CD4-positive, alpha-beta memory T cell (primary cell): ENCODE measurements at regions of chr3 and their contacts with region 1.

Region 1: GRCh38 chr3:186589121-186589520 is 18.6 kb downstream of the DNAJB11 start:
- DNase-seq: no peak
- H3K4me3 ChIP-seq: no peak overlapping the region
- H3K4me3 Mint-ChIP-seq: no peak overlapping the region
- H3K27ac ChIP-seq: no peak overlapping the region
- H3K27ac Mint-ChIP-seq: no peak overlapping the region
- H3K4me1 ChIP-seq: peaks cover 14% of the 10 kb centered on the region
- H3K4me1 Mint-ChIP-seq: peaks cover 8 to 23% (median 16%) of the 10 kb centered on the region in 4 donors
- H3K27me3 ChIP-seq: no peaks in the 10 kb centered on the region
- H3K27me3 Mint-ChIP-seq: no peaks in the 10 kb centered on the region

Region 2: DNA sequence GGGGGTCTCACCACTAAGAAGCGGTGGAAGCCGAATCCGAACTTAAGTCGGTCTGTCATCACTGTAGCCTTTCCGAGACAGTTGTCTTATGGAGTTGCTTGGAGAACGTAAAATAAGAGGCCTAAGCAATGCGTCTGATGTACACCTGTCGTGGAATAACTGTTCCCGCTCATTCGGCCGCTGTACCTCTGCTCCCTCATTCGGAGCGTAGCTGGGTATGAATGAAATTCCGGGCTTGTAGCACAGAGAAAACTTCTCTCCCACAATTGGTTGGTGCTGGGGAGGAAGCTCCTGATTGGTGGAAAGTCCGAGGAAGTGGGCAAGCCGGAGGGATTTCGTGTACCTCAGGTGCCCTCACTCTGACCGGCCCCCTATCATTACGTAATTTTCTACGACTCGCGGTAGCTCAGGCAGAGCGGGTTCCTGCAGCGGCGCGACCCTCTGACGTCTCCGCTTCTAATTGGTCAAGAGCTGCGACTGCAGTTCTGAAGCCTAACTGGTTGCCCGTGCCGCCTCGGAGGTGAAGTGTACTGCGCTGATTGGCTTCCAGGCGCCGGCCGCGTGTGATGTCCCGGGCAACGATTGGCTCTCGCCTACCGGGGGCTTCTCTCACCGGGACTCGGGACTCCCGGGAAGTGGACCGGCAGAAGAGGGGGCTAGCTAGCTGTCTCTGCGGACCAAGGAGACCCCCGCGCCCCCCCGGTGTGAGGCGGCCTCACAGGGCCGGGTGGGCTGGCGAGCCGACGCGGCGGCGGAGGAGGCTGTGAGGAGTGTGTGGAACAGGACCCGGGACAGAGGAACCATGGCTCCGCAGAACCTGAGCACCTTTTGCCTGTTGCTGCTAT is 18.8 kb before region 1 on chr3 and contains the start of gene DNAJB11:
- CTCF ChIA-PET with region 1: interaction called, 4 read pairs
- POLR2A ChIA-PET with region 1: interaction called, 4 read pairs
- intact Hi-C with region 1: loop called (anchors 2 kb)
- DNase-seq: peak; percentile 96 to 100 (median 99)
- H3K4me3 ChIP-seq: peak within 1 kb of the TSS; percentile 71 to 93
- H3K4me3 Mint-ChIP-seq: peak within 1 kb of the TSS; percentile 89 to 100 (median 94)
- H3K27ac ChIP-seq: peak within 1 kb of the TSS; percentile 91
- H3K27ac Mint-ChIP-seq: peak within 1 kb of the TSS; percentile 95 to 99 (median 98)
- H3K4me1 ChIP-seq: peaks cover 37% of the 10 kb centered on the region
- H3K4me1 Mint-ChIP-seq: peaks cover 30 to 71% (median 45%) of the 10 kb centered on the region in 4 donors
- H3K27me3 ChIP-seq: no peaks in the 10 kb centered on the region
- H3K27me3 Mint-ChIP-seq: no peaks in the 10 kb centered on the region
- total RNA-seq, gene DNAJB11: 34.0 to 38.6 TPM

Region 3: DNA sequence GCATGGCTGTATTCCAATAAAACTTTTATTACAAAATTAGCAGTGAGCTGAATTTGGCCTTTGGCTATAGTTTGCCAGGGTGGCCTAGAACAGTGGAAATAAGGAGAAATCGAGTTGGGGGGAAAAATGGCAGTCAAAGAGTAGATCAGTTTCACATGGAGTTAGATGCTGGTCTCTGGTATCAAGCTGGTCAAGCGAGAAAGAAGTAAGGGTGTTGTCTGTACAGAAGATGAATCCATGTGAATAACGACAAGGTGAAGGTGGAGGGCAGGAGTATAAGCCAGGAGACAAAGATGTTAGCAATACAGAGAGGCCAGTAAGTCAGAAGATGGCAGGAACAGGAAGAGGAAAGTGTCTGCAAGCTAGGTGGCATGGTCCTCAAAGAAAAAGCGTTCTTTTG is 35.5 kb after region 1 on chr3:
- CTCF ChIA-PET with region 1: no interaction called
- POLR2A ChIA-PET with region 1: no interaction called
- intact Hi-C with region 1: no loop called
- DNase-seq: no peak
- H3K4me3 ChIP-seq: no peak overlapping the region
- H3K4me3 Mint-ChIP-seq: no peak overlapping the region
- H3K27ac ChIP-seq: no peak overlapping the region
- H3K27ac Mint-ChIP-seq: no peak overlapping the region
- H3K4me1 ChIP-seq: no peaks in the 10 kb centered on the region
- H3K4me1 Mint-ChIP-seq: no peaks in the 10 kb centered on the region
- H3K27me3 ChIP-seq: no peaks in the 10 kb centered on the region
- H3K27me3 Mint-ChIP-seq: peaks cover 8 to 9% of the 10 kb centered on the region in 2 donors

Region 4: GRCh38 chr3:186640473-186640818 is 51.3 kb after region 1 on chr3:
- CTCF ChIA-PET with region 1: no interaction called
- POLR2A ChIA-PET with region 1: no interaction called
- intact Hi-C with region 1: no loop called
- DNase-seq: no peak
- H3K4me3 ChIP-seq: no peak overlapping the region
- H3K4me3 Mint-ChIP-seq: no peak overlapping the region
- H3K27ac ChIP-seq: no peak overlapping the region
- H3K27ac Mint-ChIP-seq: no peak overlapping the region
- H3K4me1 ChIP-seq: no peaks in the 10 kb centered on the region
- H3K4me1 Mint-ChIP-seq: no peaks in the 10 kb centered on the region
- H3K27me3 ChIP-seq: no peaks in the 10 kb centered on the region
- H3K27me3 Mint-ChIP-seq: peaks cover 16 to 24% of the 10 kb centered on the region in 2 donors